ENCODE measurements at regions of chr2 and their contacts with region 1.

Region 1: GRCh38 chr2:224357098-224357901 is 44.6 kb downstream of the FAM124B start:
- DNase-seq: no peak
- H3K4me3 ChIP-seq: no peak overlapping the region
- H3K27ac ChIP-seq: no peak overlapping the region
- H3K4me1 ChIP-seq: peaks cover 0 to 5% (median 0%) of the 10 kb centered on the region in 6 donors
- H3K27me3 ChIP-seq: no peaks in the 10 kb centered on the region
- CTCF ChIP-seq: peak; percentile 59 to 86 (median 78)
- POLR2A ChIP-seq: no peak

Region 2: DNA sequence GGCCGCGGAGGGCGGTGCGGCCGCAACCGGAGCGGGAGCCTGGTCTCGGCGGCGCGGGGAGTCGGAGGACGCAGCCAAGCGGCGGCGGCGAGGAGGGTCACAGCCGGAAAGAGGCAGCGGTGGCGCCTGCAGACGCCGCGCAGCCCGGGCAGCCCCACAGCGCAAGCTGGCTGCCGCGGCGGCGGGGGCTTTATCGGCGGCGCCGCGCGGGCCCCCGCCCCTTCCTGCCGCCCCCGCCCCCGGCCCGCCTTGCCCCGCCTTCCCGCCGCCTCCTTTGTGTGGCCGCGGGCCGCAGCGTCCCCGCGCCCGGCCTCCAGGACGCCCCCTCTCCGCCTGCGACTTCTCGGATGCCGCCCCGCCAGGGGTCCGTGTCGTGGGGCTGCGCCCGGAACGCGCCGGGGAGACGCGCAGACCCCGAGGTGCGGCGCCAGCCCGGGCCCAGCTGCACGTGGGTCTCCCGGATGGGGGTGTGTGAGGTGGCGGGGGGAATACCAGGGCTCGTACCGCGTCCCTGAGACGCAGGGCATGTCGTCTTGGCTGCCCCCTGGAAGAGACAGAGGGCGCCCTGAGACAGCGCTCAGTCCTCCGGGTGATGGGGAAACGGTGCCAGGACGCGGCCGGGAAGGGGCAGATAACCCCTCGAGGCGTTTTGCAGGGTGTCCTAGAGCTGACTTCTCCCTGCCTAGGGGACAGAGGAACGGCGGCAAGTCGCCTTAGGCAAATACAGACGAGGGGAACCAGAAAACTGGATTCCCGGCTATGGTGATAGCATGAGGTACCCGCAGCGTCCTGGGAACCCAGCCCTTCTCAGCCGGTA is 318.0 kb before region 1 on chr2 and contains the start of gene SERPINE2:
- intact Hi-C with region 1: no loop called
- DNase-seq: peak; percentile 81
- H3K4me3 ChIP-seq: peak within 1 kb of the TSS; percentile 48 to 90 (median 70)
- H3K27ac ChIP-seq: peak within 1 kb of the TSS in 7 of 8 donors; percentile 29 to 66 (median 53)
- H3K4me1 ChIP-seq: peaks cover 8 to 35% (median 23%) of the 10 kb centered on the region in 6 donors
- H3K27me3 ChIP-seq: peaks cover 0 to 68% (median 10%) of the 10 kb centered on the region in 7 donors
- CTCF ChIP-seq: peak in 4 of 11 experiments; percentile 12 to 34 (median 24)
- POLR2A ChIP-seq: no peak
- total RNA-seq, gene SERPINE2: 20.9 to 55.3 (median 31.6) TPM

Region 3: DNA sequence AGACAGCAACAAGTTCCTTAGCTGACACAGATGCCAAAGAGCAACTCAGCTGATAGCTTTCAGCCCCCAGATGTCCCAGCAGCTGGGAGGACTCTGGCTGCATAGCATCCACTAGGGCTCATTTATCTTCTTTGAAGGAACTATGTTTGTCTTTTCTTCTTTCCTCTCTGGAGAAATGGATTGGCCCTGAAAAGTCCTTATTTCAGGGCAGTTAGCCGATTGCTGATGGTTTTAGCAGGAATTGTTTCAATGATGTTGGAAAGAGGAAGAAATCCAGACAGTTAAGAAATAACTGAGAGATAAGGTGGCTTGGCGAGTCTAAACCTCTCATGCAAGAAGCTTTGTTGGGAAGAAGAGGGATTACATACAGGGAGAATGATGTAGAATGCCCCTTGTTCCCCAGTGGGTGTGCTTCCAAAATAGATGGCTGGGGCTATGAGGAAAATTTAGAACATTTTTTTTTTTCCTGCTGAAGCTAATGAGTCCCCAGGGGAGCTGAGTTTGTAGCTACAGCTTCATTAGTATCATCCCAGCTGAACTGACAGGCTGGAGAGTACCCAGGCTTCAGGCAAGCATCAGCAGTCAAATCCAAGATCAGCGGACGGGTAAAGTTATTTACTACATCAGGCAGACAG is 284.6 kb before region 1 on chr2:
- intact Hi-C with region 1: no loop called
- DNase-seq: no peak
- H3K4me3 ChIP-seq: no peak overlapping the region
- H3K27ac ChIP-seq: peak overlapping the region in 3 of 8 donors; percentile 2 to 51 (median 15)
- H3K4me1 ChIP-seq: no peaks in the 10 kb centered on the region
- H3K27me3 ChIP-seq: no peaks in the 10 kb centered on the region
- CTCF ChIP-seq: peak in 1 of 11 experiments; percentile 16
- POLR2A ChIP-seq: no peak

Region 4: DNA sequence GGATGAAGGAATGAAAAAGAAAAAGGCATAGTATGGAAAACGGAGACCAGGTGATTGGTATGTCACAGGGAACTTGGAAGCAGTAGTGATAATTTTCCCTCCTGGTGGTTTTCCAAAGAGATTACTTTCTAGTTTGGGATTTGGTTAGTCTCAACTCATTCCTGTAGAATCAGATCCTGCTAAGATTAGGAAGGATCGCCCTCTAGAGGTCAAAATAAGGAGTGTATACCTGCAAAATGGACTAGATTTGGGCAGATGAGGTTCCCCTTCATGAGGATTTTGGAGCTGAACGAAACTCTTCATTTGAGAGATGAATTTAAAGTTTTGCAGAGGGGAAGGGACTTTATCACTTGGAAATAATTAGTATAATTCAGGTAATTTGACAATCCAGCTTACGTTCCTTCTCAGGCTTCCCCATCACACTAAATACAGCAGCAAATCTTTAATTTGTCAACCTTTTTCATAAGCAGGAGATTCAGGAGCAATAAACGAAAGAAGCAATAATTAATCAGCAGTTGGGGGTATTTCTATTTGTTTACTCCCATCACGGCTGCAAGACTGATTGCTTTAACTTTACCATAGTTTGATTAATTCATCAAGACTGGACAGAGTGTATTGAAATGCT is 293.6 kb after region 1 on chr2:
- intact Hi-C with region 1: loop called (anchors 5 kb)
- DNase-seq: no peak
- H3K4me3 ChIP-seq: no peak overlapping the region
- H3K27ac ChIP-seq: no peak overlapping the region
- H3K4me1 ChIP-seq: peaks cover 0 to 11% (median 0%) of the 10 kb centered on the region in 6 donors
- H3K27me3 ChIP-seq: no peaks in the 10 kb centered on the region
- CTCF ChIP-seq: peak; percentile 35 to 81 (median 76)
- POLR2A ChIP-seq: no peak

Region 5: GRCh38 chr2:224764565-224765236 is 407.4 kb after region 1 on chr2:
- intact Hi-C with region 1: loop called (anchors 10 kb)
- DNase-seq: no peak
- H3K4me3 ChIP-seq: no peak overlapping the region
- H3K27ac ChIP-seq: peak overlapping the region in 5 of 8 donors; percentile 9 to 45 (median 31)
- H3K4me1 ChIP-seq: peaks cover 0 to 14% (median 0%) of the 10 kb centered on the region in 6 donors
- H3K27me3 ChIP-seq: no peaks in the 10 kb centered on the region
- CTCF ChIP-seq: no peak
- POLR2A ChIP-seq: no peak

Measured in spleen (tissue), 13 donors.